PC-3 (cell line): ENCODE measurements at regions of chr6 and their contacts with region 1.

Region 1: DNA sequence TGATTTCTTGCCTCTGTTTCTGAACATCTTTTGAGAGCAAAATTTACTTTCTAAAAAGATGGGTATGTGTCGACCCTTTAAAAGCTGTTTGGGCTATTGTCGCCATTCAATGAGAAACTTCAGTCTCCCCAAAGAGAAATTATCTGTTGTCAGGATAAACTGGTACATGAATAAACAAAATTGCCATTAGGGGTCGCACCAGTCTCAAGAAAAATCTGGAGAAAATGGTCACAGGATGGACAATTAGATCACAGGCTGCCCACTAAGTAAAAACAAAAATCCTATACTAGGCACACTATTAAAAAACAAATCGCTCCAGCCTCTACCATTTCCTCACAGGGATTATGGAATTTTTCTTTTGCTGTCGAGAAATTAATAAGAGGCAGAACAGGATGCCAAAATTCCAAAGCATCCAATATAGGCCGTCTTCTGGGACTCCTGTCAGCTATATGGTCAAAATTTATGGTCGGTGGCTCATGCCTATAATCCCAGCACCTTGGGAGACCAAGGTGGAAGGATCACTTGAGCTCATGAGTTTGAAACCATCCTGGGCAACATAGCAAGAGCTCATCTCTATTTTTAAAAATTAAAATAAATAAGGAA is 5.5 kb upstream of the HLA-E start:
- DNase-seq: peak; percentile 84
- ATAC-seq: no peak
- H3K4me3 ChIP-seq: no peak overlapping the region
- H3K27ac ChIP-seq: no peak overlapping the region
- H3K4me1 ChIP-seq: peaks cover 17% of the 10 kb centered on the region
- H3K27me3 ChIP-seq: peaks cover 26% of the 10 kb centered on the region
- CTCF ChIP-seq: peak; percentile 82

Region 2: DNA sequence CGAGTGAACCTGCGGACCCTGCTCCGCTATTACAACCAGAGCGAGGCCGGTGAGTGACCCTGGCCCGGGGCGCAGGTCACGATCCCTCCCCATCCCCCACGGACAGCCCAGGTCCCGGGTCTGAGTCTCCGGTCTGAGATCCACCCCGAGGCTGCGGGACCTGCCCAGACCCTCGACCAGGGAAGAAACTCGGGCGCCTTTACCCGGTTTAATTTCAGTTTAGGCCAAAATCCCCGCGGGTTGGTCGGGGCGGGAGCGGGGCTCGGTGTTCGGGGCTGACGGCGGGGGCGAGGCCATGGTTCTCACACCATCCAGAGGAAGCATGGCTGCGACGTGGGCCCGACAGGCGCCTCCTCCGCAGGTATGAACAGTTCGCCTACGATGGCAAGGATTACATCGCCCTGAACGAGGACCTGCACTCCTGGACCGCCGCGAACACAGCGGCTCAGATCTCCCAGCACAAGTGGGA is 223.7 kb before region 1 on chr6:
- CTCF ChIA-PET with region 1: no interaction called
- POLR2A ChIA-PET with region 1: no interaction called
- intact Hi-C with region 1: no loop called
- DNase-seq: no peak
- ATAC-seq: no peak
- H3K4me3 ChIP-seq: peak overlapping the region; percentile 73
- H3K27ac ChIP-seq: no peak overlapping the region
- H3K4me1 ChIP-seq: peaks cover 25% of the 10 kb centered on the region
- H3K27me3 ChIP-seq: 0 out of 2 replicates have a peak, but pooled peaks cover 7% of the 10 kb centered on the region
- CTCF ChIP-seq: no peak

Region 3: GRCh38 chr6:30533460-30534294 is 49.9 kb after region 1 on chr6:
- CTCF ChIA-PET with region 1: interaction called, 17 read pairs
- POLR2A ChIA-PET with region 1: no interaction called
- intact Hi-C with region 1: loop called (anchors 1 kb)
- DNase-seq: no peak
- ATAC-seq: no peak
- H3K4me3 ChIP-seq: no peak overlapping the region
- H3K27ac ChIP-seq: no peak overlapping the region
- H3K4me1 ChIP-seq: peaks cover 19% of the 10 kb centered on the region
- H3K27me3 ChIP-seq: no peaks in the 10 kb centered on the region
- CTCF ChIP-seq: no peak

Region 4: GRCh38 chr6:30541515-30542403 is 58.0 kb after region 1 on chr6:
- CTCF ChIA-PET with region 1: interaction called, 23 read pairs
- POLR2A ChIA-PET with region 1: no interaction called
- intact Hi-C with region 1: loop called (anchors 1 kb)
- DNase-seq: peak; percentile 95
- ATAC-seq: peak; percentile 65
- H3K4me3 ChIP-seq: peak overlapping the region; percentile 68
- H3K27ac ChIP-seq: no peak overlapping the region
- H3K4me1 ChIP-seq: peaks cover 18% of the 10 kb centered on the region; the same call in 1 of the 2 replicates
- H3K27me3 ChIP-seq: no peaks in the 10 kb centered on the region
- CTCF ChIP-seq: peak; percentile 98

Region 5: GRCh38 chr6:30590994-30591393 is 107.2 kb after region 1 on chr6:
- CTCF ChIA-PET with region 1: interaction called, 10 read pairs
- POLR2A ChIA-PET with region 1: no interaction called
- intact Hi-C with region 1: no loop called
- DNase-seq: peak; percentile 85
- ATAC-seq: peak; percentile 83
- H3K4me3 ChIP-seq: no peak overlapping the region
- H3K27ac ChIP-seq: peak overlapping the region; percentile 71
- H3K4me1 ChIP-seq: peaks cover 28% of the 10 kb centered on the region
- H3K27me3 ChIP-seq: no peaks in the 10 kb centered on the region
- CTCF ChIP-seq: no peak

Region 6: DNA sequence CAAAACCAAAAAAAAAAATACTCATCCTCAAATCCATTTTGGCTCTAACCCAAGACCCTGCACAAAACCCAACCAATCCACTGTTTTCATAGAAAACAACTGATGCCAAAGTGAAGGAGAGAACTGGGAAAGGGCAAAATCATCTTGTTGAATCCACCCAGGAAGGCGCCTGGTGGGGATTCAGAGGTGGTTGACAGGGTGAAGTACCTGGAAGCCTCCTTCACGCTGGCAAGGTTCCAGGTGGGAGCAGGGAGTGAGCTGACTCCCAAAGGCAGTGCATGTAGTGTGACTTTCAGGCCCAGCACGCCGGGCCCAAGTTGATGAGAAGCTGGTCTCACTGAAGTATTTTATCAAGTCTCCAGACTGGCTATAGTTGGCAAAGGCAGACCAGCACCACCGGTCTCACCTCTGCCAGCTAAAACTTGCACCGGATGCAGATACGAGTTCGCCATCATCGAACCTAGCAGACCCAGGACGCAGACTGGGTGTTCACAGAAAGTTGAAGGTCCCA is 116.7 kb after region 1 on chr6:
- CTCF ChIA-PET with region 1: interaction called, 10 read pairs
- POLR2A ChIA-PET with region 1: no interaction called
- intact Hi-C with region 1: loop called (anchors 1 kb)
- DNase-seq: no peak
- ATAC-seq: no peak
- H3K4me3 ChIP-seq: no peak overlapping the region
- H3K27ac ChIP-seq: no peak overlapping the region
- H3K4me1 ChIP-seq: no peaks in the 10 kb centered on the region
- H3K27me3 ChIP-seq: no peaks in the 10 kb centered on the region
- CTCF ChIP-seq: no peak

Region 7: GRCh38 chr6:30672445-30673253 is 188.9 kb after region 1 on chr6 and contains the start of gene DHX16:
- CTCF ChIA-PET with region 1: no interaction called
- POLR2A ChIA-PET with region 1: no interaction called
- intact Hi-C with region 1: loop called (anchors 5 kb)
- DNase-seq: peak; percentile 99
- ATAC-seq: peak; percentile 82
- H3K4me3 ChIP-seq: peak within 1 kb of the TSS; percentile 75
- H3K27ac ChIP-seq: no peak within 1 kb of the TSS
- H3K4me1 ChIP-seq: peaks cover 4% of the 10 kb centered on the region
- H3K27me3 ChIP-seq: no peaks in the 10 kb centered on the region
- CTCF ChIP-seq: peak; percentile 95
- total RNA-seq, gene DHX16: 50.0 and 75.6 TPM in 2 replicates